Activated CD8-positive, alpha-beta T cell treated with anti-CD3 and anti-CD28 coated beads, Interleukin-2, amount 10 ng/mL, durations not matched to agents 7 days and 5 days (primary cell): ENCODE measurements at regions of chr12 and their contacts with region 1.

Region 1: DNA sequence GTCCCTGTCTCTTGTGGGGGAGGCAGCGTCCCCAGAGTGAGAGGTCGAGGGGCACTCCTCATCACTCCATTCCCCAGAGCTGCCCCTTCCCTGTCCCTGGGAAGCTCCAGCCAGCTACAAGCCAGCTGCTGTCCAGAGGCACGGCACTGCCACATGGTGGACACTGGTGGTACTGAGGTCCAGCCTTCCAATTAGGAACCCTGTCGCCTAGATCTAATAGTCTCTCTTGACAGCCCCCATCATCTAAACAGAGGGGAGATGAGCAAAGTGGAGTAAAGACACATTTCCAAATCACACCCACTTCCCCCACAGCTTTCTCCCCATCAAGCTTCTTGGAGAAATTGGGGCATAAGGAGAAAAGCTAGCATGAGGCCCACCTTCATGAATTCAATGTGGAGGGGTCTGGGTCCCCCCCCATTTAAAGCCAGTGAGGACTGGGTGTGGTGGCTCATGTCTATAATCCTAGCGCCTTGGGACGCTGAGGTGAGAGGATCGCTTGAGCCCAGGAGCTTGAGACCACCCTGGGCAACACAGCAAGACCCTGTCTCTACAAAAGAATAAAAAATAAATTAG is 2.1 kb upstream of the INHBE start:
- DNase-seq: peak; percentile 70
- ATAC-seq: peak; percentile 54
- H3K4me3 Mint-ChIP-seq: no peak overlapping the region
- H3K27ac Mint-ChIP-seq: no peak overlapping the region
- H3K4me1 Mint-ChIP-seq: peaks cover 30% of the 10 kb centered on the region
- H3K27me3 Mint-ChIP-seq: no peaks in the 10 kb centered on the region

Region 2: DNA sequence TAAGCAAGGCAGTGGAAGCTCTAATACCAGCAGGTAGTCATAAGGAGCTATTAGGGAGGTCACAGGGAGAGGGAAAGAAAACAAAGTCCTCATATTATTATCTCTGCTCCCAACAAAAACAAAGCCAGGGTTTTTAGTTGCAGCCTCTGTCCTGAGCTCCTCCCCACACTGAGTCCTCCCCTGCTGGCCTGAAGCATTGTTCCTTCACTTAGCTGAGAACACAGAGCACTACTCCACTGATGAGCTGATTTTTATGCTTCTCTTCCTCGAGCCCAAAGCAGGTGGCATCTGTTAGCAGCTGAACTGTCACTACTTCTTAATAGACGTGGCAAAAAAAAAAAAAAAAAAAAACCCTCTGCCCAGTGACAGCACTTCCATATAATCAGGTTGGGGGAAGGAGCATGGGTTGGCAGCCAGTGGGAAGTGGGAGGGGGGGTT is 191.6 kb before region 1 on chr12:
- CTCF ChIA-PET with region 1: interaction called, 54 read pairs
- POLR2A ChIA-PET with region 1: no interaction called
- DNase-seq: no peak
- ATAC-seq: no peak
- H3K4me3 Mint-ChIP-seq: no peak overlapping the region
- H3K27ac Mint-ChIP-seq: no peak overlapping the region
- H3K4me1 Mint-ChIP-seq: peaks cover 8% of the 10 kb centered on the region
- H3K27me3 Mint-ChIP-seq: no peaks in the 10 kb centered on the region

Region 3: DNA sequence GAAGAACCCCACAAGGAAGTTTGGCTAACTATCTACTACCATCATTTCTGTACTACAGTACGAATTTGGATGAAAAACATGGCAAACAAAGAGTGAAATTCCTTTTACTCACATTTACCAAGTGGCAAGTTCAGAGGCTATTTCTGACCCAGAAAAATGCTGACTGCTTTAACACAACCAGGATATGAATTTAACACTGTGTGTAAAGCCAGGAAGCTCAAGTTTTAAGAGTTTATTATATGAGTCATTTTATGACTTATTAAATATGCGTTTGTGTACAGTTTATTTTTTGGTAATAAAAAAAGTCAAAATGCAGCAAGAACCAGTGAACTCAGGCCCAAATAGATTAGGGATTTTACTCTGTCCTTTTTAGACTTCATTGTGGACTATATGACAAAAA is 143.6 kb before region 1 on chr12:
- CTCF ChIA-PET with region 1: interaction called, 145 read pairs
- POLR2A ChIA-PET with region 1: no interaction called
- DNase-seq: no peak
- ATAC-seq: no peak
- H3K4me3 Mint-ChIP-seq: no peak overlapping the region
- H3K27ac Mint-ChIP-seq: no peak overlapping the region
- H3K4me1 Mint-ChIP-seq: peaks cover 10% of the 10 kb centered on the region
- H3K27me3 Mint-ChIP-seq: no peaks in the 10 kb centered on the region

Region 4: DNA sequence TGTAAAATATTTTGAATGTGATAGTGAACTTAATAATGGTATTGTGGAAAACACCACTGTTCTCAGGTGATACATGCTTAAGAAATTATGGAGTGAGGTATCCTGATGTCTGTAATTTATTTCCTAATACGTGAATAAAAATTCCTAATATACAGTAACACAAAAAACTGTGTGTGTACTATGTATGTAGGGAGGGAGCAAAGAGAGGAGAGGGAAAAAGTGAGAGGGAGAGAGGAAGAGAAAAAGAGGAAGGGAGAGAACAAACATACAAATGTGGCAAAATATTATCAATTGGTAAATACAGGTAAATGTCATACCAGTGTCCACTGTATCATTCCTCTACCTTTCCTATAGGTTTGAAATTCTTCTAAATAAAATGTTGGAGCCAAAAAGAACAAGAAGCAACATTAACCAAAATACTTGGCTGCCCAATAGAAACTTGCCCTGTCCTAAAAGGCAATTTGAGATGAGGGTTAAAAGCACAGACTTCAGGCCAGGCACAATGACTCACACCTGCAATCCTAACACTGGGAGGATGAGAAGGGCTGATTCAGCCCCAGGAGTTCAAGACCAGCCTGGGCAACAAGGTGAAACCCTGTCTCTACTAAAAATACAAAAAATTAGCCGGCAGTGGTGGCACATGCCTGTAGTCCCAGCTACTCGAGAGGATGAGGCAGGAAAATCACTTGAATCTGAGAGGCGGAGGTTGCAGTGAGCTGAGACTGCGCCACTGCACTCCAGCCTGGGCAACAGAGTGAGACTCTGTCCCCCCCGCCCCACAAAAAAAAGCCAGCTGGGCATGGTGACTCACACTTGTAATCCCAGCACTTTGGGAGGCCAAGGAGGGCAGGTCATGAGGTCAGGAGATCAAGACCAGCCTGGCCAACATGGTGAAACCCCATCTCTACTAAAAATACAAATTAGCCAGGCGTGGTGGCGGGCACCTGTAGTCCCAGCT is 36.7 kb before region 1 on chr12:
- CTCF ChIA-PET with region 1: interaction called, 16 read pairs
- POLR2A ChIA-PET with region 1: no interaction called
- DNase-seq: no peak
- ATAC-seq: no peak
- H3K4me3 Mint-ChIP-seq: no peak overlapping the region
- H3K27ac Mint-ChIP-seq: no peak overlapping the region
- H3K4me1 Mint-ChIP-seq: no peaks in the 10 kb centered on the region
- H3K27me3 Mint-ChIP-seq: no peaks in the 10 kb centered on the region

Region 5: GRCh38 chr12:57430112-57430930 is 22.7 kb before region 1 on chr12:
- CTCF ChIA-PET with region 1: interaction called, 32 read pairs
- POLR2A ChIA-PET with region 1: interaction called, 12 read pairs
- DNase-seq: peak; percentile 57
- ATAC-seq: peak; percentile 64
- H3K4me3 Mint-ChIP-seq: peak overlapping the region; percentile 97
- H3K27ac Mint-ChIP-seq: peak overlapping the region; percentile 98
- H3K4me1 Mint-ChIP-seq: peaks cover 42% of the 10 kb centered on the region
- H3K27me3 Mint-ChIP-seq: no peaks in the 10 kb centered on the region

Region 6: GRCh38 chr12:57438400-57438799 is 14.6 kb before region 1 on chr12:
- CTCF ChIA-PET with region 1: interaction called, 21 read pairs
- POLR2A ChIA-PET with region 1: interaction called, 4 read pairs
- DNase-seq: no peak
- ATAC-seq: no peak
- H3K4me3 Mint-ChIP-seq: no peak overlapping the region
- H3K27ac Mint-ChIP-seq: no peak overlapping the region
- H3K4me1 Mint-ChIP-seq: peaks cover 16% of the 10 kb centered on the region
- H3K27me3 Mint-ChIP-seq: peaks cover 10% of the 10 kb centered on the region